Esophagus muscularis mucosa (tissue), 4 donors: ENCODE measurements at regions of chr6 and their contacts with region 1.

Region 1: GRCh38 chr6:83859410-83860358 is at the start of gene CYB5R4:
- DNase-seq: peak; percentile 97
- H3K4me3 ChIP-seq: peak within 1 kb of the TSS; percentile 78 to 93 (median 84)
- H3K27ac ChIP-seq: peak within 1 kb of the TSS; percentile 87 to 92 (median 90)
- H3K4me1 ChIP-seq: peaks cover 19 to 37% (median 31%) of the 10 kb centered on the region in 4 donors
- H3K27me3 ChIP-seq: no peaks in the 10 kb centered on the region
- CTCF ChIP-seq: peak; percentile 33 to 52 (median 48)
- EP300 ChIP-seq: no peak
- POLR2A ChIP-seq: peak; percentile 49
- total RNA-seq, gene CYB5R4: 9.7 to 15.4 (median 10.5) TPM

Region 2: DNA sequence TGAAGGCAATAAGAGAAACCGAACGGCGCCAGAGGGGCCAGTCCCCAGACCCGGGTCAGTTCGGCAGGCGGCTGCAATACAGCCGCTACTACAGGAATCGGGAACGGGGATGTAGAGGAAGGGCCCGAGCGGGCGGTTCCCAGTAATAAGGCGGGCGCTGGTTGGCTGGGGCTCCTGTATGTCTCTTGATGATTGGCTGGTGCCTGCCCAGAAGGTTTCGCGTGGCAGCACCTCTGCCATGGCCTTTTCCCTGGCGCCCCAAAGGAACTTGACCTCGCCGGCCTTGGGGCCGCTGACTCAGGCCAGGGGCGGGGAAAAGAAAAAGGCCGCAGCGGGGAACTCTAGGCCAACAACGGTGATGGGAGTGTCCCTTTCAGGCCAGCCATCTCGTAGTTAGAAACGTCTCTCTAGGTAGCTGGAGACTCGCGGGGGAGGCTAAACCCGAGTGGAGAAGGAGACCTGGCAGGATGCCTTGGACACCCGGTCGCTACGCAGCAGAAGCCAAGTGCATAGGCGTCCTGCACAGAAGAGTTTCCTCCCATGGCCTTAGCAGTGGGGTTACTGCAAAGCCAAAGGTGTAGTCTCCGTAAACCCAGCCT is 1612.0 kb before region 1 on chr6 and contains the start of gene IBTK:
- intact Hi-C with region 1: loop called (anchors 10 kb)
- DNase-seq: peak; percentile 99
- H3K4me3 ChIP-seq: peak within 1 kb of the TSS; percentile 90 to 94 (median 92)
- H3K27ac ChIP-seq: peak within 1 kb of the TSS; percentile 95 to 97 (median 96)
- H3K4me1 ChIP-seq: peaks cover 29 to 62% (median 49%) of the 10 kb centered on the region in 4 donors
- H3K27me3 ChIP-seq: no peaks in the 10 kb centered on the region
- CTCF ChIP-seq: no peak
- EP300 ChIP-seq: no peak
- POLR2A ChIP-seq: peak; percentile 59
- total RNA-seq, gene IBTK: 26.2 to 38.6 (median 27.2) TPM